Endothelial cell of umbilical vein (primary cell): ENCODE measurements at regions of chr18 and their contacts with region 1.

Region 1: DNA sequence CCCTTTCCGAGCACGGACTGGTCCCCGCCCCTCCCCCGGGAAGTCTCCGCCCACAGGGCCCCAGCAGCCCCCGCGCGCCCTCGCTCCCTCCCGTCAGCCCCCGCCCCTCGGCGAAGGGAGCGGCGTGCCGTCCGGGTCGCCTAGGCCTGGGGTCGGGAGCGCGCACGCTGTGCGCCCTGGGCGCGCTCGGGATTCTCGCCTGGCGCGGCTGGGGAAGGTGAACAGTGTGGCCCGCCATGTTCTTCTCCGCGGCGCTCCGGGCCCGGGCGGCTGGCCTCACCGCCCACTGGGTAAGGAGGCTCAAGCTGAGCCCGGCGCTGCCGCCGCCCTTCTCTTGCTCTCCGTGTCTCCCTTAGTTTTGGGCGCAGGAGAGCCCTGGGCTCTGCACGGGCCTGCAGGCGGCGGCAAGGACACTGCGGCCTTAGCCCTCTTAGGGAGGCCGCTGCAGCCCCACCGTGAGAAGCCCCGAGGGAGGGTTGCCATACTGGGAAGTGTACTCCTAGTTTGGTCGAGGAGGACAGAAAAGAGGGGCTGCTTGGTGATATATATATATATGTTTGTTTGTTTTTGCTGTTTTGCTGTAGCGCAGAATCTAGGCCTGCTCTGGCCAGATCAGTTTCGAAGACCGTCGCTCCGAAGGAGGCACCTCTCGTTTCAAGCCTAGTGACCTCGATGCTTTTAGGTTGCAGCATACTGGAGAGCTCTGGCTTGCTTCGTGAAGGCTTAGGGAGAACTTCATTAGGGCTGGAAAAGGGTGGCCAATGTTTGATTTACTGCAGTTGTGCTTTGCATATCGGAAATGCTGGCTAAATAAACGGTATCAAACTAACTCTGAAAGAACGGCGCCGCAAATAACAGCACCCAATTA is at the start of gene NDUFV2:
- DNase-seq: peak; percentile 95
- H3K4me3 ChIP-seq: peak within 1 kb of the TSS; percentile 69 to 98 (median 92)
- H3K27ac ChIP-seq: peak within 1 kb of the TSS; percentile 95
- H3K4me1 ChIP-seq: peaks cover 46% of the 10 kb centered on the region
- H3K27me3 ChIP-seq: no peaks in the 10 kb centered on the region
- CTCF ChIP-seq: no peak
- POLR2A ChIP-seq: no peak
- total RNA-seq, gene NDUFV2: 147 and 152 TPM in 2 replicates

Region 2: GRCh38 chr18:8943900-8944870 is 158.6 kb before region 1 on chr18:
- CTCF ChIA-PET with region 1: no interaction called
- POLR2A ChIA-PET with region 1: no interaction called
- dilution Hi-C with region 1: no loop called
- intact Hi-C with region 1: no loop called
- DNase-seq: no peak
- H3K4me3 ChIP-seq: no peak overlapping the region
- H3K27ac ChIP-seq: no peak overlapping the region
- H3K4me1 ChIP-seq: peaks cover 4% of the 10 kb centered on the region
- H3K27me3 ChIP-seq: no peaks in the 10 kb centered on the region
- CTCF ChIP-seq: no peak
- POLR2A ChIP-seq: no peak

Region 3: DNA sequence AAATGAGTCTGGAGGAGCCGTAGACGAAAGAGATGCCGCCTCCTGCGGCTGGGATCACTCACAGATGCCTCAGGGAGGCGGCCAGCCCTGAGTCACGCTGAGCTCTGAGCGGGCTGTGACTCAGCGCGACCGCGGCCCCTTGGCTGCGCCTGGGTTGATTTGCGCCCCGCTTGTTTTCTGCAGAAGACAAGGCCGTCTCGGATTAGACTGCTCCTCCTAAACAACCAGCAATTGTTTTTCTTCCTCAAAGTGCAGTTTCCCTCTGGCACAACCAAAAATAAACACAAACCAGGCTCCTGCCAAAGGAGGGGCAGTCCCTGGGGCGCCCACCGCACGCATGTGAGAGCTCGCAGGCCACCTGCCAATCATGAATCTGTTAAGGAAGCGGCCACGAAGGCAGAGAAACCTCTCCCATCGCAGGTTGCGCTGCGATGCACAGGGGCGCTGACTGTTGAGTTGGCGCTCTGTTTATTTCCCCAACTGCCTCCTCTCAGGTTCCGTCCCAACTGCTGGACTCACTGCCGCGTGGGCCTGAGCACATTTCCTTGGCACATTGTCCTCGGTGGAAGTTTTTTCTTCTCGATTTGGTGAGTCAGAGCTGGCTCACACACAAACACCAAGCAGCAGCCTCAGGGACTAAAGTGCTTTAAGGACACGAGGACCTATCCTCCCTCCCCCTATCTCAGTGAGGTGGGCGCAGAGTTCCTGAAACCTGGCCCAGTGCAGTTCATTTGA is 85.4 kb before region 1 on chr18:
- CTCF ChIA-PET with region 1: no interaction called
- POLR2A ChIA-PET with region 1: no interaction called
- dilution Hi-C with region 1: no loop called
- intact Hi-C with region 1: loop called (anchors 1 kb)
- DNase-seq: peak; percentile 87
- H3K4me3 ChIP-seq: no peak overlapping the region
- H3K27ac ChIP-seq: peak overlapping the region; percentile 90
- H3K4me1 ChIP-seq: peaks cover 23% of the 10 kb centered on the region
- H3K27me3 ChIP-seq: no peaks in the 10 kb centered on the region
- CTCF ChIP-seq: no peak
- POLR2A ChIP-seq: peak; percentile 23

Region 4: DNA sequence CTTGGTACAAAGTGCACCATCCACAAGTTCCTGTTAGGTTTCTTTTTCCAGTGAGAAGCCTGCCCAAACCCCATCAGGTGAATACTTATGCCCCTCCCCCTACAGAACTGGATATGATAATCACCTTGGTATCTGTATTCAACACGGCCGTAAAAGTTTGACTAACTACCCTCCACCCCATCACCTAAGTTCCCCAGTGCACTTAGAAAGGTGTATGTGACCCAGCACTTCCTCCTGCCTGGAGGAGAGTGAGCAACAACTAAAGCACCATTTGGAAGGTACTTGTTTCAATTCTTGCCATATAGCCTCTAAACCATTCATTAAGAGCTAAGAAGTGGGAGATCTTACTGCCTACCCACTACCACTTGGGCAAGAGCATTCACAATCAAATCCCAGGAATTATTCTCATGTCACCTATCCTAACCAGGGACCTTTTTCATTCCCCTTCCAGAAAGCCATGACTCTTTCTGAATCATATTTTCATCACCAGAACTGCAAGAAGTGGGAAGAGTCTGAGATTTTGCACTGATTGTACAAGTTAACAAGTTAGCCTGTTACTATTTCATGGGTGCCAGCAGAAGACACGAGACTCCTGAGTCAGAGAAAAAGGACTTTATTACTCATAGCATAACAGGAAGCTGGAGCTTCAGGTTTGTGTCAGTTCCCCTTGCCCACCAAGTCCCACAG is 53.8 kb before region 1 on chr18:
- CTCF ChIA-PET with region 1: no interaction called
- POLR2A ChIA-PET with region 1: no interaction called
- dilution Hi-C with region 1: no loop called
- intact Hi-C with region 1: no loop called
- DNase-seq: no peak
- H3K4me3 ChIP-seq: no peak overlapping the region
- H3K27ac ChIP-seq: no peak overlapping the region
- H3K4me1 ChIP-seq: no peaks in the 10 kb centered on the region
- H3K27me3 ChIP-seq: no peaks in the 10 kb centered on the region
- CTCF ChIP-seq: no peak
- POLR2A ChIP-seq: no peak

Region 5: GRCh38 chr18:9066817-9067306 is 35.9 kb before region 1 on chr18:
- CTCF ChIA-PET with region 1: no interaction called
- POLR2A ChIA-PET with region 1: no interaction called
- dilution Hi-C with region 1: no loop called
- intact Hi-C with region 1: loop called (anchors 2 kb)
- DNase-seq: no peak
- H3K4me3 ChIP-seq: no peak overlapping the region
- H3K27ac ChIP-seq: no peak overlapping the region
- H3K4me1 ChIP-seq: no peaks in the 10 kb centered on the region
- H3K27me3 ChIP-seq: no peaks in the 10 kb centered on the region
- CTCF ChIP-seq: no peak
- POLR2A ChIP-seq: no peak

Region 6: DNA sequence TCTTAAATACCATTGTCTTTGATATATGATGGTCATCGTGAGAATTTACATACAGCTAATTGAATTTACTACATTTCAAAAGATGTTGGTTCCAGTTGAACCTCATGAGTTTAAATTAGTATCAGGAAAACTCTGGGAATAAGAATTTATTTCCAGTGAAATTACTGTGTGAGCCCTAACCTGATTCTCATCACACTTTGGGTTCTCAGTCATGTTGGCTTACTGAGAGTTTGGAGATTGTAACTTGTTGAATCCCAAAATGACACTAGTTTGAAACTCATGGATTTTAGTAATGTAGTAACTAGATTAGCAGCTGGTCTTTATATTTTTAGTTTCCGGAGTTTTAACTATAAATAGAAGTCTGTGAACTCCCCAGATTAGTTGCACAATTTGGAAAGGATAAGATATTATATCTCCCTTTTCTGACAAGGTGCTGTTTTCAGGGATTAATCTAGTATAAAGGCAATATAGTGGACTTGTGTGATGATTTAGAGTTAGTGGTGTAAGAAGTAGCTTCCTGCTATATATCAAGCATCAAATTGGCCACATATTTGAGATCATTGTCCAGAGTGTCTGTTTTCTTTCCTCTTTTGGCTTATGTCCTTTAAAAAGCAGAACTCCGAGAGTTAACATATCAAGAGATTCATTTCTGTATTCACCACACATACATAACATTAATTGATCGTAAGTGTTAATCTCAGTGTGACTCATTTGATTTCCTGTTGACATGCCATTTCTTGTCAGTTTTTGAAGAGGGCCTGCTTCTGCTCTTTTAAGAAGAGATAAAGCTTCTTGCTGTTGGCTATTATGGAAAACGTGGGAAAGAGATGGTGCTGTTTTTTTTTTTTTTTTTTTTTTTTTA is 15.5 kb after region 1 on chr18:
- CTCF ChIA-PET with region 1: interaction called, 22 read pairs
- POLR2A ChIA-PET with region 1: no interaction called
- dilution Hi-C with region 1: no loop called
- intact Hi-C with region 1: loop called (anchors 1 kb)
- DNase-seq: peak; percentile 86
- H3K4me3 ChIP-seq: peak overlapping the region in 1 of 3 experiments; percentile 4
- H3K27ac ChIP-seq: peak overlapping the region; percentile 82
- H3K4me1 ChIP-seq: peaks cover 42% of the 10 kb centered on the region
- H3K27me3 ChIP-seq: no peaks in the 10 kb centered on the region
- CTCF ChIP-seq: no peak
- POLR2A ChIP-seq: no peak

Region 7: GRCh38 chr18:9156604-9157249 is 54.0 kb after region 1 on chr18:
- CTCF ChIA-PET with region 1: no interaction called
- POLR2A ChIA-PET with region 1: no interaction called
- dilution Hi-C with region 1: no loop called
- intact Hi-C with region 1: no loop called
- DNase-seq: no peak
- H3K4me3 ChIP-seq: no peak overlapping the region
- H3K27ac ChIP-seq: no peak overlapping the region
- H3K4me1 ChIP-seq: peaks cover 2% of the 10 kb centered on the region
- H3K27me3 ChIP-seq: no peaks in the 10 kb centered on the region
- CTCF ChIP-seq: no peak
- POLR2A ChIP-seq: no peak

Region 8: DNA sequence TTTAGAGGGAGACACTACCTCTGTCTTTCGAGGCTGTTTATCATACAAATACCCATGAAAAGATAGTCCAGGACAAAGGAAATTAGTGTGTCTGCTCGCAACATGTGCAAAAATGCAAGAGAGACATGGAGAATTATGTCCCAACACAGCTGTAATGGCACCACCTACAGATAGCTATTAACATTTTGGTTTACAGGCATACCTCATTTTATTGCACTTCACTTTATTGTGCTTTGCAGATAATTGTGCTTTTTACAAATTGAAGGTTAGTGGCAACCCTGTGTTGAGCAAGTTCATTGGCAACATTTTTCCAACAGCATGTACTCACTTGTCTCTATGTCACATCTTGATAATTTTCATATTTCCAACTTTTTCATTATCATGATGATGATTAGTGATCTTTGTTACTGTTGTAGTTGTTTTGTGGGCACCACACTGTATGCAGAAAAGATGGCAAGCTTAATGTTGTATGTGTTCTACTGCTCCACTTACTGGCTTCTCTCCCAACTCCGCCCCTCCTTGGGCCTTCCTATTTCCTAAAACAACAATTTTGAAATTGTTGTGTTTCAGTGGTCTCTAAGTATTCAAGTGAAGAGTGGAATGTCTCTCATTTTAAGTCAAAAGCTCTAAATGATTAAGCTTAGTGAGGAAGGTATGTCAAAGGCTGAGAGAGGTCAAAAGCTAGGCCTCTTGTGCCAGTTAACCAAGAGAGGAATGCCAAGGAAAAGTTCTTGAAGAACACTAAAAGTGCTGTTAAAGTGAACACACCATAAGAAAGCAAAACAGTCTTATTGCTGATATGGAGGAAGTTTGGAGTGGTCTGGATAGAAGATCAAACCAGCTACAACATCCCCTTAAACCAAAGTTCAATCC is 85.9 kb after region 1 on chr18:
- CTCF ChIA-PET with region 1: no interaction called
- POLR2A ChIA-PET with region 1: no interaction called
- dilution Hi-C with region 1: no loop called
- intact Hi-C with region 1: no loop called
- DNase-seq: peak; percentile 52
- H3K4me3 ChIP-seq: no peak overlapping the region
- H3K27ac ChIP-seq: no peak overlapping the region
- H3K4me1 ChIP-seq: peaks cover 30% of the 10 kb centered on the region
- H3K27me3 ChIP-seq: no peaks in the 10 kb centered on the region
- CTCF ChIP-seq: no peak
- POLR2A ChIP-seq: no peak

Region 9: DNA sequence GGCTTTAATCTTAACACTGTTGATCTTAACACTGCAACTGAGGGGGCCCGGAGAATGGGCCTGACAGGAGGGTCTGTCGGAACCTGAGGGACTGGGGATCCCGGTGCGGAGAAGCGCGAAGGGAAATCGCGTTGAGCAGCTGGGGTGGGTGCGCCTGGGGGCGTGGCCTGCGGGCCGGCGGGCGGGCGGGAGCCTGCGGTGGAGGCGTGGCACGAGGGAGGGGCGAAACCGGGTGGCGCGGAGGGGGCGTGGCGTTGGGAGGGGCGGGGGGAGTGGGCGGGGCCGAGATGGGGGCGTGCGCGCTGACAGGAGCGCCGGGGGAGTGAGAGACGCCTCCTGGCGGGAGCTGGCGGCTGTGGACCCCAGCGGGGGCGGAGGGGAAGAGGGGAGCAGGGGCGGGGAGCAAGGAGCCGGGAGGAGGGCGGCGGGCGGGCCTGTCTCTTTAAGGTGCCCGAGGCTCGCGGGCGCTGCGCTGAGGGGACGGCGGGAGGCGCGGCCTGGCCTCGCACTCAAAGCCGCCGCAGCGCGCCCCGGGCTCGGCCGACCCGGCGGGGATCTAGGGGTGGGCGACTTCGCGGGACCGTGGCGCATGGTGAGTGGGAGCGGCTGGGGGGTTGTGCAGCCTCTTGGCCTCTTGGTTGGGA is 231.7 kb after region 1 on chr18 and contains the start of gene TWSG1:
- CTCF ChIA-PET with region 1: no interaction called
- POLR2A ChIA-PET with region 1: interaction called, 3 read pairs
- dilution Hi-C with region 1: no loop called
- intact Hi-C with region 1: loop called (anchors 5 kb)
- DNase-seq: peak; percentile 93
- H3K4me3 ChIP-seq: peak within 1 kb of the TSS; percentile 77 to 88 (median 87)
- H3K27ac ChIP-seq: peak within 1 kb of the TSS; percentile 71
- H3K4me1 ChIP-seq: peaks cover 3% of the 10 kb centered on the region
- H3K27me3 ChIP-seq: no peaks in the 10 kb centered on the region
- CTCF ChIP-seq: peak in 1 of 2 donors; percentile 65
- POLR2A ChIP-seq: peak; percentile 65
- total RNA-seq, gene TWSG1: 57.4 and 69.6 TPM in 2 replicates

Region 10: DNA sequence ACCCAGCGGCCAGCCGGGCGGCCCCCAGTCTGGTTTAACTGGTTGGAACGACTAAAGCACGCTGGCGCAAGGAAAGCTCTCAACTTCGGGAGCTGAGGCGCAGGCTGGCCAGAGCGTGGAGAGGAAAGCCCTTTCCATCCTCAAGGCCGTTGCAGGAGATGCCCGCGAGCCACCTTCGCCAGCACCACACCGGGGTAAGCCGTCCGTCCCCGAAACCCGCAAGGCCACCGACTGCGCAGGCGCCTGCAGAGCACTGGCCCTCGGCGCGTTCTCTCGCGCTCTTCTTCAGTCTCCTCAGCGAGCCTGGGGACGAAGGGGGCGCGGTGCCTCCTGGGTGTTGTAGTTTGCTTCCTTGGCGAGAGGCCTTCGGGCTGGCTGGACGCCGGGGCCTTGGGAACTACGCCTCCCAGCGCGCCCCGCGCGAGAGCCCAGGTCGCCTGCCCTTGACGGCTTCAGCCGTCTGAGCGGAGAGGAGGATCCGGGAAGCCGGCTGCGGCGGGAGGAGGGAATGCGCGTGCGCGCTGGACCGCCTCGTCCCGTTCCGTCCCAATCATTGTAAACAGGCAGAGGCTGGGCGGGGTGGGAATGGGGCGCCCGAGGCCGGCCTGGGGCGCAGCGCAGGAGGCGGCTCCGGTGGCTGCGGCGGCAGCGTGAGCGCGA is 372.4 kb after region 1 on chr18 and contains the start of gene RALBP1:
- CTCF ChIA-PET with region 1: no interaction called
- POLR2A ChIA-PET with region 1: no interaction called
- dilution Hi-C with region 1: no loop called
- intact Hi-C with region 1: loop called (anchors 1 kb)
- DNase-seq: peak; percentile 100
- H3K4me3 ChIP-seq: peak within 1 kb of the TSS; percentile 90 to 100 (median 91)
- H3K27ac ChIP-seq: peak within 1 kb of the TSS; percentile 74
- H3K4me1 ChIP-seq: peaks cover 14% of the 10 kb centered on the region
- H3K27me3 ChIP-seq: no peaks in the 10 kb centered on the region
- CTCF ChIP-seq: peak in 1 of 2 donors; percentile 11
- POLR2A ChIP-seq: peak; percentile 93
- total RNA-seq, gene RALBP1: 63.5 and 68.4 TPM in 2 replicates